ENCODE measurements at regions of chr4 and their contacts with region 1.

Region 1: GRCh38 chr4:155953151-155954114 is at the start of gene CTSO:
- DNase-seq: peak; percentile 81
- CTCF ChIP-seq: peak; percentile 53

Region 2: GRCh38 chr4:155403886-155404285 is 549.5 kb before region 1 on chr4:
- CTCF ChIA-PET with region 1: no interaction called
- POLR2A ChIA-PET with region 1: no interaction called
- DNase-seq: no peak
- CTCF ChIP-seq: peak; percentile 29

Region 3: DNA sequence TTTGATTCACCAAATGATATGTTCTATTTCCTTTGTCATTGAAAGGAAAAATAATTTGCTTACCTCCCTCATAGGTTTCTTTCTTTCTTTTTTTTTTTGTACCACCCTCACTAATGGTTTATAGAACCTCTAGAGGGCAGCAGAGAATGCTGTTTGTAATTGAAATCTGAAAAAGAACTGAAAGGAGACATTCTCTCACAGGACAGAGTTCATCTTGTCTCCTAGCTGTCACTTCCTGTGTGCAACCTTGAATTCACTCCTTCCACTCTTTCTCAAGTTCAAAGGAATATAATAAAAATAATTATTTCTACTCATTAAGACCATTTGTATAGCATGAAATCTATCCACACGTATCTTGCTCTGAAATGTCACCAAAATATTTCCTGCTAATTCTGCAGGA is 143.6 kb before region 1 on chr4:
- CTCF ChIA-PET with region 1: interaction called, 34 read pairs
- POLR2A ChIA-PET with region 1: no interaction called
- DNase-seq: peak; percentile 48
- CTCF ChIP-seq: peak; percentile 55

Region 4: DNA sequence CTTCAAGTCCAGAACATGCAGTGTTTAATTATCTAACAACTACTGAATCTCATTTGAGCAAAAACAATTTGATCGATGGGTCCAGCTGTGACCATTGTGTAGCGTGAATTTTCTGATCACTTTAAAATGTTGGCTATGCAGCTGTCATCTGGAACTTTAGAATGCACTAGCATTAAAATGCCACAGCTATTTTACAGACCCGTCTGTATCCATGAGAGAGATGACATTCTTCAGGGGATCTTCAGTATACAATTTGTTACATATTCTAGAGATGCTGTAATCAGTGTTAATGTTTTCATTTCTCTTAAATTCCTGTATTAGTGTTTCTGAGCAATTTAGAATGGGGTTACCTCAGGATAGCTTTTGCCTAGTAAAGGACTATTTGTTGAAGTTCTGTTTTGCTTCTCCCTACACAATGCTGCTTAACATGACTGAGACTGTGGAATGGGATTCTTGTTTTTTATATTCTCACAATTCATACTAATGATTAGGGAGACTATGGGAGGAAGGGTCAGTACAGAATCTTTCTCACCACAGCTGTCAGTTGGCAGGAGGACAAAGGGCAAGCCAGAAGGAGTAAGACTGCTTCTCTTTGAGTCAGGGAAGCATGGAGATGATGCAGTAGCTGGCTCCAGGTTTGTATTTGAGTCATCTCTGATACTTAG is 13.4 kb after region 1 on chr4:
- CTCF ChIA-PET with region 1: interaction called, 18 read pairs
- POLR2A ChIA-PET with region 1: no interaction called
- DNase-seq: no peak
- CTCF ChIP-seq: no peak

Region 5: DNA sequence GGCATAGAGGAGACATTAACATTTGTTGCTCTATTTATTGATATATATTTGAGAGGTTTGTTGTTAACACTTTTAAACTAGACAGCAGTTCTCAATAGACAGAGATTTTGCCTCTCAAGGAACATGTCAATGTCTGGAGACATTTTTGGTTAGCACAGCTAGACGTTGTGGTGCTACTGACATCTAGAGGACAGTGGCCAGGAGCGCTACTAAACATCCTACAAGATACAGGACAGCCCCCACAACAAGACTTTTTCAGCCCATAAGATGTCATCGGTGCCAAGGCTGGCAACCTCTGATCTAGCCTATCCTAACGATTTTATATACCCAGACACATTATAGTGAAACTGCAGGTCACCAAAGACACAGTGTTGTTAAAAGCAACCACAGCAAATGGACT is 18.7 kb after region 1 on chr4:
- CTCF ChIA-PET with region 1: interaction called, 18 read pairs
- POLR2A ChIA-PET with region 1: no interaction called
- DNase-seq: no peak
- CTCF ChIP-seq: peak; percentile 9

Region 6: GRCh38 chr4:157942017-157942416 is 1988.6 kb after region 1 on chr4:
- CTCF ChIA-PET with region 1: no interaction called
- POLR2A ChIA-PET with region 1: no interaction called
- DNase-seq: no peak
- CTCF ChIP-seq: no peak

Measured in GM10248 (cell line).